Left ventricle myocardium superior (tissue), 1 donor: ENCODE measurements at regions of chr1 and their contacts with region 1.

Region 1: DNA sequence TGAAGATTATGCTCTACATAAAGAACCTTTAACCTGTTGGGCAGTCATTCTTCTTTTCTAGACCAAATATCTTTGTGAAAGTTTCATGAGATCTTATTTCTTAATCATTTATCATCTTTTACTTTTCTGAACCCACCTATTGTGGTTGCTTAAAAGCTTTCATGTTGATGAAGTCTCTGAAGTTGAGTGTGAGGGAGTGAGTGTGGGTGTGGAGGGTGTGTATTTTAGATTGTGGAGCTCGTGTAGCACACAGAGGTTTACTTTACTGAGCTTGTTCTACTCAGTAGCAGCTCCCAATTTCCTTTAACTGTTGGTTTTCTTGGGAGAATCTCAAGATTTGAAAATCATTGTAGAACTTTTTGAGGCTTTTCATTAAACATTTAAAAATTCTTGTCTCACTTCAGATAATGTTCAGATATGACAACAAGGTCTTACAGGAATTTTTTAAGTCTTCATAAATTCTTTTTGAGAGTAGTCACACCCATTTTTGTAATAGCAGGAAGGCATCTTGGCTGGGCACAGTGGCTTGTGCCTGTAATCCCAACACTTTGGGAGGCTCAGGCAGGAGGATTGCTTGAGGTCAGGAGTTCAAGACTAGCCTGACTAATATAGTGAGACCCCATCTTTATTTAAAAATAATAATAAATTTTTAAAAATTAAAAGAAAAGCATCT is 17.0 kb downstream of the SRRM1 start:
- DNase-seq: no peak
- ATAC-seq: no peak

Region 2: GRCh38 chr1:24289937-24290595 is 370.1 kb before region 1 on chr1:
- intact Hi-C with region 1: no loop called
- DNase-seq: peak; percentile 93
- ATAC-seq: peak; percentile 99

Region 3: GRCh38 chr1:24426744-24427544 is 233.2 kb before region 1 on chr1:
- intact Hi-C with region 1: no loop called
- DNase-seq: no peak
- ATAC-seq: peak; percentile 52

Region 4: GRCh38 chr1:25223471-25223870 is 563.3 kb after region 1 on chr1:
- intact Hi-C with region 1: loop called (anchors 10 kb)
- DNase-seq: no peak
- ATAC-seq: no peak